ENCODE measurements at regions of chr14 and their contacts with region 1.

Region 1: GRCh38 chr14:63454863-63455622 is 88.1 kb downstream of the PPP2R5E start:
- DNase-seq: no peak
- ATAC-seq: peak; percentile 83
- H3K4me3 ChIP-seq: no peak overlapping the region
- H3K27ac ChIP-seq: no peak overlapping the region
- H3K4me1 ChIP-seq: no peaks in the 10 kb centered on the region; the same call in 1 of the 2 replicates
- H3K27me3 ChIP-seq: no peaks in the 10 kb centered on the region
- CTCF ChIP-seq: no peak
- EP300 ChIP-seq: no peak
- POLR2A ChIP-seq: no peak
- RAD21 ChIP-seq: no peak

Region 2: GRCh38 chr14:63443988-63444387 is 11.1 kb before region 1 on chr14:
- CTCF ChIA-PET with region 1: interaction called, 11 read pairs
- POLR2A ChIA-PET with region 1: interaction called, 3 read pairs
- RAD21 ChIA-PET with region 1: no interaction called
- SMC1A ChIA-PET with region 1: interaction called, 10 read pairs
- in situ Hi-C with region 1: no loop called
- intact Hi-C with region 1: no loop called
- DNase-seq: no peak
- ATAC-seq: no peak
- H3K4me3 ChIP-seq: no peak overlapping the region
- H3K27ac ChIP-seq: no peak overlapping the region
- H3K4me1 ChIP-seq: no peaks in the 10 kb centered on the region
- H3K27me3 ChIP-seq: no peaks in the 10 kb centered on the region
- CTCF ChIP-seq: no peak
- EP300 ChIP-seq: no peak
- POLR2A ChIP-seq: no peak
- RAD21 ChIP-seq: no peak